ENCODE measurements at regions of chr12 and their contacts with region 1.

Region 1: GRCh38 chr12:125402874-125403789 is 337.9 kb downstream of the AACS start:
- DNase-seq: no peak
- H3K4me3 Mint-ChIP-seq: no peak overlapping the region
- H3K27ac Mint-ChIP-seq: no peak overlapping the region
- H3K4me1 Mint-ChIP-seq: peaks cover 2% of the 10 kb centered on the region
- H3K27me3 Mint-ChIP-seq: no peaks in the 10 kb centered on the region

Region 2: GRCh38 chr12:125239563-125239962 is 163.6 kb before region 1 on chr12:
- CTCF ChIA-PET with region 1: interaction called, 5 read pairs
- POLR2A ChIA-PET with region 1: no interaction called
- intact Hi-C with region 1: loop called (anchors 5 kb)
- DNase-seq: no peak
- H3K4me3 Mint-ChIP-seq: no peak overlapping the region
- H3K27ac Mint-ChIP-seq: no peak overlapping the region
- H3K4me1 Mint-ChIP-seq: no peaks in the 10 kb centered on the region
- H3K27me3 Mint-ChIP-seq: peaks cover 7% of the 10 kb centered on the region

Region 3: DNA sequence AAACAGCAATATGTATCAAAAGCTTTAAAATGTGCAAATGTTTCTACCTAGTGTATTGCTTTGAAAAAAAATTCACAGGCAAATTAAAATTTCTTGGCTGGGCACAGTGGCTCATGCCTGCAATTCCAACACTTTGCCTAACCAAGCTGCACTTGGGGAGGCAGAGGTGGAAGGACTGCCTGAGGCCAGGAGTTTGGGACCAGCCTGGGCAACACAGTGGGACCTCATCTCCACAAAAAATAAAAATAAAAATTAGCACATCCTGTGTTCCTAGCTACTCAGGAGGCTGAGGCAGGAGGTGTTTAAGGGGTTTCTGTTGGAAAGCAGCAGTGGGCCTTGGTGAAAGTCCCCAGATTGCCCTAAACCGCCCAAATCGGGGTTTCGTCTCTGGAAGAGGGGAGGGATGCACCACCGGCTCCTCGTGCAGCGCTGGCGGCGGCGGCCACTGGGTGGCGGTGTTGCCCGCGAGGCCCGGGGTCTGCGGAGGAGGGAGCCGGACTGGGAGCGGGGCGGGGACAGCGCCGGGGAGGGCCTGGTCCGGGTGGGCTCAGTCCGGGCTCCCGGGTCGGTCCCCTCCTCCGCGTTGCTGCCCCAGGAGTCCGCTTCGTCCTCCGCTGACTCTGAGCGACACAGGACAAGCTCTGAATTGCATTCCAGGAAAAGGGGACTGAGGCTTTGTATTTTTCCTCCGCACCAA is 72.3 kb before region 1 on chr12:
- CTCF ChIA-PET with region 1: interaction called, 9 read pairs
- POLR2A ChIA-PET with region 1: no interaction called
- intact Hi-C with region 1: loop called (anchors 5 kb)
- DNase-seq: peak; percentile 65
- H3K4me3 Mint-ChIP-seq: no peak overlapping the region
- H3K27ac Mint-ChIP-seq: no peak overlapping the region
- H3K4me1 Mint-ChIP-seq: no peaks in the 10 kb centered on the region
- H3K27me3 Mint-ChIP-seq: peaks cover 14% of the 10 kb centered on the region

Region 4: DNA sequence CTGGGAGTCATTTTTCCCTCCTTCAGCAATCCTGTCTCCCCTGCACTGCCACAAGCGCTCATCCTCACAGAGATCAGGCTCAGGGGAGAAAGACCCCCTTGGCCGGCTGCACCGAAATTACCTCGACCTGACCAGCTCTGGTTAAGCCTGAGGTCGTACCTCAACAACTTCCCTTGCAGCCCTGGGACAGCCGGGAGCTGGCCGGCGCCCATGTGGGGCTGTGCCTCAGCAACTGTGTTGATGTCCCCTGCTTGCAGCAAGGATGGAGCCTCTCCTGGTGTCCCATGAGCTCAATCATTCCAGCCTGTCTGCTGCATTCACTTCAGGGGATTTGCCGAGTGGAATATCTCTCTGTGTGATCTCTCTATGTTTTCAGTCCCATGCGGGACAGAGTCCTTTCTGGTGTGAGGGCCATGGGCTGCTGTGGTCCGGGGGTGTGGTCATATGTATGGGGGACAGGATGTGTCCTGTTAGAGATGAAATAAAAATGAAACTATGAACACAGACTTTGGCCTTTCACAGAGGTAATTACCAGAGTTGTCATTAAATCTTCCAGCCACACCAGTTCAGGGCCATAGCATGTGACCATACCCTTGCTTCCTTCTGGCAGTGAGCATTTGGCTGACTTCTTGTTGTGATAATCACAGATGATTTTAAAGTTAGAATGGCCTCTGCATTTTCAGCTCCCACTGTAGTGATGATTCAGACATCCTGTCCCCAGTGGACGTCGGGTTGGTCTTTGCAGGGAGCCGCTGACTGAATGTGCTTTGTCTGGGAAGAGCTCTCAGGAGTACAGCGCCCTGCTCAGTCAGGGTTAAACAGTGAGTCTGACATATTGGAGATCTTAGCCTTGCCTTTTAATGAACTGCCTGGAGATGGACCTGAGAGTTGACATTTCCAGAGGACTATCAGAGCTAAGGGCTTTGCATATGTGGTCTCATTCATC is 68.0 kb after region 1 on chr12:
- CTCF ChIA-PET with region 1: no interaction called
- POLR2A ChIA-PET with region 1: no interaction called
- intact Hi-C with region 1: no loop called
- DNase-seq: no peak
- H3K4me3 Mint-ChIP-seq: no peak overlapping the region
- H3K27ac Mint-ChIP-seq: no peak overlapping the region
- H3K4me1 Mint-ChIP-seq: no peaks in the 10 kb centered on the region
- H3K27me3 Mint-ChIP-seq: no peaks in the 10 kb centered on the region